ENCODE measurements at regions of chr18 and their contacts with region 1.

Region 1: GRCh38 chr18:12287684-12288402 is 20.2 kb upstream of the TUBB6 start:
- DNase-seq: peak; percentile 57
- ATAC-seq: peak; percentile 9
- H3K4me3 Mint-ChIP-seq: peak overlapping the region; percentile 82
- H3K27ac Mint-ChIP-seq: peak overlapping the region; percentile 55
- H3K4me1 Mint-ChIP-seq: peaks cover 36% of the 10 kb centered on the region
- H3K27me3 Mint-ChIP-seq: peaks cover 33% of the 10 kb centered on the region
- CTCF ChIP-seq: no peak

Region 2: GRCh38 chr18:12254136-12254829 is 33.6 kb before region 1 on chr18 and contains the start of gene CIDEA:
- CTCF ChIA-PET with region 1: interaction called, 15 read pairs
- POLR2A ChIA-PET with region 1: no interaction called
- DNase-seq: peak; percentile 66
- ATAC-seq: peak; percentile 75
- H3K4me3 Mint-ChIP-seq: peak within 1 kb of the TSS; percentile 73
- H3K27ac Mint-ChIP-seq: no peak within 1 kb of the TSS
- H3K4me1 Mint-ChIP-seq: peaks cover 24% of the 10 kb centered on the region
- H3K27me3 Mint-ChIP-seq: peaks cover 70% of the 10 kb centered on the region
- CTCF ChIP-seq: no peak
- total RNA-seq, gene CIDEA: 0.23 to 0.50 TPM (median 0.23 TPM) in 3 replicates

Region 3: DNA sequence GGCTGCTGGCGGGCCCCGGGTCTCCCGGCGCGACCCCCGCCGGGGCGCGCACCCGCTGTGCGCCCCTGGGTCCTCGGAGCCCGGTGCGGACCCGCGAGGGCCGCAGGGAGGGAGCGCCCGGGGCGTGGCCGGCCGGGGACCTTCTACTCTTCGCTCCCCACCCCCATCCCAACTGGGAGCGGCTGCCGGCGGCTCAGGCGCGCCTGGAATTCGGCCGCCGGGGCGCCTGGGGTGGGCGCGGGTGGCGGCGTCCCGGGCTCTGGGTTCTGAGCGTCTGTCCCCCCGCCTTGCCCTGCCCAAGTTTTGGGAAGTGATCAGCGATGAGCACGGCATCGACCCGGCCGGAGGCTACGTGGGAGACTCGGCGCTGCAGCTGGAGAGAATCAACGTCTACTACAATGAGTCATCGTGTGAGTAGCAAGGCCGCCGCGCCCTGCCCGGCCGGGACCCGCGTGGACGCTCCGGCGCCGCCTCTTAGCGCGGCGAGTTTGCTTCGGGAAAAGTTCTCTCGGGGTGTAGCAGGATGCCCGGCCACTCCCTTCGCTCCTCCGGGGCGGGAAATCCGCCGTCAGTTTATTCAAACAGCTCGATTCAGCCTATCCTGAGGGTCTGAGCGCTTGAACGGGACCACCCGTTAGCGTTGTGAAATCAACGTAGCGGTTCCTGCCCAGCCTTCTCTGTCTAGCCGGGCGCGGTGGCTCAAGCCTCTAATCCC is 20.7 kb after region 1 on chr18:
- CTCF ChIA-PET with region 1: interaction called, 18 read pairs
- POLR2A ChIA-PET with region 1: interaction called, 8 read pairs
- DNase-seq: peak; percentile 67
- ATAC-seq: peak; percentile 33
- H3K4me3 Mint-ChIP-seq: peak overlapping the region; percentile 79
- H3K27ac Mint-ChIP-seq: no peak overlapping the region
- H3K4me1 Mint-ChIP-seq: peaks cover 49% of the 10 kb centered on the region
- H3K27me3 Mint-ChIP-seq: peaks cover 20% of the 10 kb centered on the region
- CTCF ChIP-seq: no peak

Region 4: GRCh38 chr18:12442946-12443345 is 155.1 kb after region 1 on chr18:
- CTCF ChIA-PET with region 1: no interaction called
- POLR2A ChIA-PET with region 1: no interaction called
- DNase-seq: no peak
- ATAC-seq: no peak
- H3K4me3 Mint-ChIP-seq: no peak overlapping the region
- H3K27ac Mint-ChIP-seq: no peak overlapping the region
- H3K4me1 Mint-ChIP-seq: no peaks in the 10 kb centered on the region
- H3K27me3 Mint-ChIP-seq: no peaks in the 10 kb centered on the region
- CTCF ChIP-seq: no peak

Measured in WTC11 (cell line).